Thyroid gland (tissue), 4 donors: ENCODE measurements at regions of chr2 and their contacts with region 1.

Region 1: DNA sequence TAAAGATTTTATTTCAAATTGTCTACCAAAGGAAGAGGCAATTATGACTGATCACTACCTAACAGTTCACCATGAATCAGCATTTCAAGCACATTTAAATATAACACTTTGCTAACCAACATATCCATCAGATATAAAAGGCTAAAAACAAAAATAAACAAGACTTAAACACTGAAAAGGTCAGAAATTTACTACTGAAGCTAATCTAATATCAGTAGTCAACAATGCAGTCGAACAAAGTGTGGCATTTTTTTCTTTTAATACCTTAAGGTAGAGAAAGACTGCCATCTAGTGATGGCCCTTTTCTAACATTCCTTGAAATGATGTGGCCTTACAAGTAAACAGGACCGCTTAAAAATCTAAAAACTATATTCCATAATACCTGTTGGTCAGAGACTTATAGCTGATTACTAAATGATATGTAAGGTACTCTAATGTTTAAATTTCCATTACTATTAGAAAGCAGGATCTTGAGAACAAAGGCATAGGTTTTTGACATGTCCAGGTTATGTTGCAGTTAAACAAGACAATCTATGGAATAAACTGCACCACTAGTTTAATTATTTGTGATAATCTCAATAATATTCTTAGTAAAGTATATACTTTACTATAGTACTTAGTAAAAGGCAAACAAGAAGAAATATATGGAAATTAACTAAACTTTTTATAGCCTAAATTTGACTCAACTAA is 80.0 kb downstream of the EXOC6B start:
- DNase-seq: no peak
- H3K4me3 ChIP-seq: no peak overlapping the region
- H3K27ac ChIP-seq: no peak overlapping the region
- H3K4me1 ChIP-seq: no peaks in the 10 kb centered on the region
- H3K27me3 ChIP-seq: no peaks in the 10 kb centered on the region
- CTCF ChIP-seq: peak in 5 of 6 experiments; percentile 51 to 76 (median 71)
- POLR2A ChIP-seq: no peak

Region 2: GRCh38 chr2:71558300-71559051 is 1187.3 kb before region 1 on chr2:
- intact Hi-C with region 1: loop called (anchors 10 kb)
- DNase-seq: peak; percentile 87 to 90
- H3K4me3 ChIP-seq: no peak overlapping the region
- H3K27ac ChIP-seq: peak overlapping the region in 2 of 3 donors; percentile 51 to 56
- H3K4me1 ChIP-seq: peaks cover 7 to 59% of the 10 kb centered on the region in 2 donors
- H3K27me3 ChIP-seq: no peaks in the 10 kb centered on the region
- CTCF ChIP-seq: no peak
- POLR2A ChIP-seq: no peak

Region 3: DNA sequence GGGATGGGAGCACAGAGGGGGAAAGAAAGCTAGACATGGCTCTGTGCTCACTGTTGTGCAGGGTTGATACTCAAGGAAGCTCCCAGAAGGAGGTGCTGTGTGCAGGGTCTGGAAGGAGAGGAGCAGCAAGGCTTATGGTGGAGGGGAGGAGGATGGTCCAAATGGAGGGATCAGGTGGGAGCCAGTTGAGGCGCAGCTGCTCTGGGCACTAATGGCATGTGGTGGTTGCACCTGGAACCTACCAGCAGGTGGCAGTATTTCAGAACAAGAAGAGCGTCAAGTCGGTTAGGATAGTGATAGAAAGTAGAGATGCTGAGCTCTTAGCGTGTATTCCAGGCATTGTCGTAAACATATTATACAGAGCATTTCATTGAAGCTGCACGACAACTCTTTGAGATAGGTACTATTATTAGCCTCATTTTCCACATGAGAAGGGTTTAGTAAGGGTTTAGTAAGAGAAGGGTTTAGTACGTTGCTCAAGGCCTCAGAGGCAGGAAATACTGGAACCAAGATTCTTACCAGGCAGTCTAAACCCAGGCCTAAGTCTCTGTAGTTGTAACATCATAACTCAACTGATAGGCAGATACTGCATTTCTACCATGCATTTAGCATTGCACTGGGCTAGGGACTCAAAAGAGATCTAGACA is 821.8 kb before region 1 on chr2:
- intact Hi-C with region 1: loop called (anchors 5 kb)
- DNase-seq: peak; percentile 74 to 75
- H3K4me3 ChIP-seq: no peak overlapping the region
- H3K27ac ChIP-seq: no peak overlapping the region
- H3K4me1 ChIP-seq: no peaks in the 10 kb centered on the region
- H3K27me3 ChIP-seq: no peaks in the 10 kb centered on the region
- CTCF ChIP-seq: peak; percentile 60 to 84 (median 79)
- POLR2A ChIP-seq: no peak

Region 4: DNA sequence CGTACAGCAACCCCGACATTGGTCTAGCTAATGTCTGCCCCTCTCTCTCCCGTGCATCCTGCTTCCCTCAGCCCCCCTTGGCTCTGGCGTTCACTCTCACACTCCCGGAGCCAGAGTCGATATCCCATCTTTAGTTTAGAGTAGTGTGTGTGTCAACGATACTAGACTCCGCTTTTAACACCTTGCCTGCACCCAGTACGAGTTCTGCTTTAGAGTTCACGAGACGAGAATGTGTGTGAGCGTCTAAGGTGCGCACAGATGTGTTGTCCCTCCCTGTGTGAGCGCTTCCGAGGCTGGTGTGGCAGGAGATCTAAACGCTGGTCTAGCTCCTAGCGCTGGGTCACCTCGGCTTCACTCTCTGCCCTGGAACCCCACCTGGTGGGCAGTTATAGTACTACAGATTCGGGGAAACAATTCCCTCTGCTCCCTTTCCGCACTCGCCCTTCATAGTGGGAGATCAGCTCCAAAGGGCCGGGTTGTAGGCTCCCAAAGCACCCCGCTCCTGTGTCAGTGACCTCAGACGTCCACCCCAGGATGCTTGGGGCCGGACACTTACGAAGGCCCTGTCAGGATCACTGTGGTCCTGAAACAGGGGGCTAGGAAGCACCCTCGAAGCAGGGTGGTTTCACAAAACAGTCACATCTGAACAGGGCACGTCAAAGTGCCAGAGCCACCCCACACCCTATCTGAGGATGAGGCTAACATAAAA is 595.5 kb before region 1 on chr2:
- intact Hi-C with region 1: loop called (anchors 10 kb)
- DNase-seq: peak; percentile 76 to 79
- H3K4me3 ChIP-seq: peak overlapping the region in 1 of 3 donors; percentile 56
- H3K27ac ChIP-seq: no peak overlapping the region
- H3K4me1 ChIP-seq: peaks cover 40 to 42% of the 10 kb centered on the region in 2 donors
- H3K27me3 ChIP-seq: peaks cover 30% of the 10 kb centered on the region
- CTCF ChIP-seq: peak; percentile 81 to 93 (median 88)
- POLR2A ChIP-seq: no peak

Region 5: GRCh38 chr2:72579591-72580180 is 166.1 kb before region 1 on chr2:
- intact Hi-C with region 1: loop called (anchors 10 kb)
- DNase-seq: no peak
- H3K4me3 ChIP-seq: no peak overlapping the region
- H3K27ac ChIP-seq: no peak overlapping the region
- H3K4me1 ChIP-seq: peaks cover 5 to 9% of the 10 kb centered on the region in 2 donors
- H3K27me3 ChIP-seq: no peaks in the 10 kb centered on the region
- CTCF ChIP-seq: peak; percentile 25 to 72 (median 58)
- POLR2A ChIP-seq: no peak